Panc1 (cell line): ENCODE measurements at regions of chr16 and their contacts with region 1.

Region 1: GRCh38 chr16:22763437-22764080 is 50.4 kb upstream of the HS3ST2 start:
- DNase-seq: no peak
- ATAC-seq: no peak
- H3K4me3 ChIP-seq: no peak overlapping the region
- H3K27ac ChIP-seq: no peak overlapping the region
- H3K4me1 ChIP-seq: no peaks in the 10 kb centered on the region
- H3K27me3 ChIP-seq: peaks cover 2% of the 10 kb centered on the region; the same call in 1 of the 2 replicates
- CTCF ChIP-seq: no peak

Region 2: DNA sequence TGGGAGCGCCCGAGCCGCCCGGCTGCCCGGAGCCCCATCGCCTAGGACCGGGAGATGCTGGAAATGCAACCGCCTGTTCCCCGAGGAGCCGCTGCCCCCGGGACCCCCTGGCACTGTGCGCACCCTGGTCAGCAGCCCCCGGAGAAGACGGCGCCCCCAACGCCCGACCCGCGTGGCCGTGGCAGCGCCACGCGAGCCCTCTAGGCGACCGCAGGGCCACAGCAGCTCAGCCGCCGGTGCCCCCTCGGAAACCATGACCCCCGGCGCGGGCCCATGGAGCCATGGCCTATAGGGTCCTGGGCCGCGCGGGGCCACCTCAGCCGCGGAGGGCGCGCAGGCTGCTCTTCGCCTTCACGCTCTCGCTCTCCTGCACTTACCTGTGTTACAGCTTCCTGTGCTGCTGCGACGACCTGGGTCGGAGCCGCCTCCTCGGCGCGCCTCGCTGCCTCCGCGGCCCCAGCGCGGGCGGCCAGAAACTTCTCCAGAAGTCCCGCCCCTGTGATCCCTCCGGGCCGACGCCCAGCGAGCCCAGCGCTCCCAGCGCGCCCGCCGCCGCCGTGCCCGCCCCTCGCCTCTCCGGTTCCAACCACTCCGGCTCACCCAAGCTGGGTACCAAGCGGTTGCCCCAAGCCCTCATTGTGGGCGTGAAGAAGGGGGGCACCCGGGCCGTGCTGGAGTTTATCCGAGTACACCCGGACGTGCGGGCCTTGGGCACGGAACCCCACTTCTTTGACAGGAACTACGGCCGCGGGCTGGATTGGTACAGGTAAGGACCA is 51.0 kb after region 1 on chr16:
- CTCF ChIA-PET with region 1: no interaction called
- POLR2A ChIA-PET with region 1: no interaction called
- in situ Hi-C with region 1: loop called (anchors 5 kb)
- intact Hi-C with region 1: no loop called
- DNase-seq: no peak
- ATAC-seq: no peak
- H3K4me3 ChIP-seq: no peak overlapping the region
- H3K27ac ChIP-seq: no peak overlapping the region
- H3K4me1 ChIP-seq: no peaks in the 10 kb centered on the region
- H3K27me3 ChIP-seq: peaks cover 6% of the 10 kb centered on the region
- CTCF ChIP-seq: no peak

Region 3: GRCh38 chr16:23149349-23149996 is 385.9 kb after region 1 on chr16 and contains the start of gene USP31:
- CTCF ChIA-PET with region 1: no interaction called
- POLR2A ChIA-PET with region 1: no interaction called
- in situ Hi-C with region 1: no loop called
- intact Hi-C with region 1: no loop called
- DNase-seq: peak; percentile 68
- ATAC-seq: peak; percentile 97
- H3K4me3 ChIP-seq: peak within 1 kb of the TSS; percentile 80 to 89
- H3K27ac ChIP-seq: peak within 1 kb of the TSS; percentile 87
- H3K4me1 ChIP-seq: peaks cover 30% of the 10 kb centered on the region
- H3K27me3 ChIP-seq: peaks cover 2% of the 10 kb centered on the region; the same call in 1 of the 2 replicates
- CTCF ChIP-seq: no peak
- total RNA-seq, gene USP31: 27.2 TPM